ENCODE measurements at regions of chr20 and their contacts with region 1.

Region 1: GRCh38 chr20:3820048-3820900 is at the start of gene AP5S1:
- DNase-seq: peak; percentile 90
- H3K4me3 Mint-ChIP-seq: peak within 1 kb of the TSS; percentile 85
- H3K27ac Mint-ChIP-seq: peak within 1 kb of the TSS; percentile 89
- H3K4me1 Mint-ChIP-seq: peaks cover 42% of the 10 kb centered on the region
- H3K27me3 Mint-ChIP-seq: no peaks in the 10 kb centered on the region
- total RNA-seq, gene AP5S1: 14.9 and 15.0 TPM in 2 replicates

Region 2: DNA sequence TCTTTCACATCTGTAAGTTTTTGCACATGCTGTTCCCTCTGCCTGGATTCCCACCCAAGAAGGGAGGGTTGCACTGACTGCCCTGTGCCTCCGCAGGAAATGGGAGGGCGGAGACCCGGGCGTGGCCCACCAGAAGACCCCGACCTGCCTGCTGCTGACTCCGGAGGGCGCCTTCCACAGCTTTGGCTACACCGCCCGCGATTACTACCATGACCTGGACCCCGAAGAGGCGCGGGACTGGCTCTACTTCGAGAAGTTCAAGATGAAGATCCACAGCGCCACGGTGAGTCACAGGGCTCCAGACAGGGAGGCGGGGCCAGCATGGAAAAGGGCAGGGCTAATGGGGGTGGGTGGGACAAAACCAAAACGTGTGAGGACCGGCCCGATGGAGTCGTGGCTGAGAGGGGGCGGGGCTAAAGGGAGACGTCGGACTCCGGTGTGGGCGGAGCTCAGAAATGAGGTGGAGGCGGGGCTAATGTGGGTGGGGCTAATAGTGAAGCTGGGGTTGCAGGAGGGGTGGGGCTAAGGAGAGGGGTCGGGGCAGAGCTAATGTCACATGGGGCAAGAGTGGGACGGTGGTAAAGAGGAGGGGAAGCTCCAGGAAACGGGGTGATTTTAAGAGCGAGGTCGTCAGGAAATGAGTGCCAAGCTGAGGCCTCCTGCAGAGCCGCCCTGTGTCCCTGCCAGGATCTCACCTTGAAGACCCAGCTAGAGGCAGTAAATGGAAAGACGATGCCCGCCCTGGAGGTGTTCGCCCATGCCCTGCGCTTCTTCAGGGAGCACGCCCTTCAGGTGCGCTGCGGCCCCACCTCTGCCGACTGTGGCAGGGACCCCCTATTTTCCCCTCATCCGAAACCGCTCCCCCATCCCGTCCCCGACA is 75.2 kb before region 1 on chr20:
- intact Hi-C with region 1: loop called (anchors 2 kb)
- DNase-seq: peak; percentile 59
- H3K4me3 Mint-ChIP-seq: peak overlapping the region; percentile 63
- H3K27ac Mint-ChIP-seq: no peak overlapping the region
- H3K4me1 Mint-ChIP-seq: peaks cover 13% of the 10 kb centered on the region
- H3K27me3 Mint-ChIP-seq: peaks cover 15% of the 10 kb centered on the region

Region 3: GRCh38 chr20:3781153-3781910 is 38.9 kb before region 1 on chr20 and contains the start of gene SPEF1:
- intact Hi-C with region 1: loop called (anchors 1 kb)
- DNase-seq: no peak
- H3K4me3 Mint-ChIP-seq: peak within 1 kb of the TSS; percentile 64
- H3K27ac Mint-ChIP-seq: no peak within 1 kb of the TSS
- H3K4me1 Mint-ChIP-seq: peaks cover 43% of the 10 kb centered on the region
- H3K27me3 Mint-ChIP-seq: peaks cover 24% of the 10 kb centered on the region
- total RNA-seq, gene SPEF1: 0.12 TPM in 1 of 2 replicates, not detected in the other

Region 4: DNA sequence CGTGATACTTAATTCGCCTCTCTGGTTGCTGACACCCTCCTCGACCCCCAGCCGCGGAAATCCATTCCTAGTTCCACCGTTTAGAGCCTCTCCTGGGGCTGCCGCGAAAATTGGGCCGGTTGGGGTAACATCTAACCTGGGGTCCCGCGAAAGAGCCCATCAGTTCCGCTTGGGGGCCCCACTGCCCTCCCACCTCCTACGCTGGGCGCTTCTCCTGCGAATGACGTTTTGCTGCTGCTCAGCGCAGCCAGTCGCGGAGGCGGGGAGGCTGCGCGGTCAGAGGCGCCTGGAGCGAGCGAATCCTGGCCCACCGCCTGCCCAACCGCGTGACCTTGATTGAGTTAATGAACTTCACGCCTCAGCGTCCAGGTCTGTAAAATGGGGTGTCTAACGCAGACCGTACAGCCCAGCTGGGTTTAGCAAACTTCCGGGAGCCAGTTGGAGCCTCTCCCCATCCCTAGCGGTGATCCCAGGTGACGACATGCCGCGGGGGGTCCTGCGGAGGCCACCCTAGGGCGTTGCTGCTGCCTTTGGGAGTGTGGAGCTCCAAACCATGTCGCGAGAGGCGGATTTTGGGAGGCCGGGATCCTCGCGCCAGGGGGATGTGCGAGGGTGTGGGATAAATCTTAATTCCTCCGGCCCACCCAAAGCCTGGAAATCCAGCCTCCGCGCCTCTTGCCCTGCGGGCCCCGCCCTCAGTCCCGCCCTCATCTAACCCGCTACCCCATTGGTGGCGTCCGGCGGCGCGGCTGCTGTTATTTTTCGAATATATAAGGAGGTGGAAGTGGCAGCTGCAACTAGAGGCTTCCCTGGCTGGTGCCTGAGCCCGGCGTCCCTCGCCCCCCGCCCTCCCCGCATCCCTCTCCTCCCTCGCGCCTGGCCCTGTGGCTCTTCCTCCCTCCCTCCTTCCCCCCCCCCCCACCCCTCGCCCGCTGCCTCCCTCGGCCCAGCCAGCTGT is 24.5 kb before region 1 on chr20 and contains the start of gene CDC25B:
- intact Hi-C with region 1: loop called (anchors 1 kb)
- DNase-seq: peak; percentile 81
- H3K4me3 Mint-ChIP-seq: peak within 1 kb of the TSS; percentile 93
- H3K27ac Mint-ChIP-seq: peak within 1 kb of the TSS; percentile 96
- H3K4me1 Mint-ChIP-seq: peaks cover 47% of the 10 kb centered on the region
- H3K27me3 Mint-ChIP-seq: no peaks in the 10 kb centered on the region
- total RNA-seq, gene CDC25B: 71.7 and 76.2 TPM in 2 replicates

Region 5: GRCh38 chr20:3888622-3889488 is 68.6 kb after region 1 on chr20 and contains the start of gene PANK2:
- intact Hi-C with region 1: loop called (anchors 1 kb)
- DNase-seq: peak; percentile 98
- H3K4me3 Mint-ChIP-seq: peak within 1 kb of the TSS; percentile 100
- H3K27ac Mint-ChIP-seq: peak within 1 kb of the TSS; percentile 98
- H3K4me1 Mint-ChIP-seq: peaks cover 44% of the 10 kb centered on the region
- H3K27me3 Mint-ChIP-seq: no peaks in the 10 kb centered on the region
- total RNA-seq, gene PANK2: 51.4 and 54.6 TPM in 2 replicates

Region 6: GRCh38 chr20:4014031-4014474 is 193.8 kb after region 1 on chr20:
- intact Hi-C with region 1: loop called (anchors 1 kb)
- DNase-seq: no peak
- H3K4me3 Mint-ChIP-seq: peak overlapping the region; percentile 87
- H3K27ac Mint-ChIP-seq: peak overlapping the region; percentile 78
- H3K4me1 Mint-ChIP-seq: peaks cover 57% of the 10 kb centered on the region
- H3K27me3 Mint-ChIP-seq: peaks cover 4% of the 10 kb centered on the region

Region 7: GRCh38 chr20:4227085-4227821 is 407.0 kb after region 1 on chr20:
- intact Hi-C with region 1: no loop called
- DNase-seq: no peak
- H3K4me3 Mint-ChIP-seq: no peak overlapping the region
- H3K27ac Mint-ChIP-seq: no peak overlapping the region
- H3K4me1 Mint-ChIP-seq: peaks cover 5% of the 10 kb centered on the region
- H3K27me3 Mint-ChIP-seq: peaks cover 18% of the 10 kb centered on the region

Region 8: DNA sequence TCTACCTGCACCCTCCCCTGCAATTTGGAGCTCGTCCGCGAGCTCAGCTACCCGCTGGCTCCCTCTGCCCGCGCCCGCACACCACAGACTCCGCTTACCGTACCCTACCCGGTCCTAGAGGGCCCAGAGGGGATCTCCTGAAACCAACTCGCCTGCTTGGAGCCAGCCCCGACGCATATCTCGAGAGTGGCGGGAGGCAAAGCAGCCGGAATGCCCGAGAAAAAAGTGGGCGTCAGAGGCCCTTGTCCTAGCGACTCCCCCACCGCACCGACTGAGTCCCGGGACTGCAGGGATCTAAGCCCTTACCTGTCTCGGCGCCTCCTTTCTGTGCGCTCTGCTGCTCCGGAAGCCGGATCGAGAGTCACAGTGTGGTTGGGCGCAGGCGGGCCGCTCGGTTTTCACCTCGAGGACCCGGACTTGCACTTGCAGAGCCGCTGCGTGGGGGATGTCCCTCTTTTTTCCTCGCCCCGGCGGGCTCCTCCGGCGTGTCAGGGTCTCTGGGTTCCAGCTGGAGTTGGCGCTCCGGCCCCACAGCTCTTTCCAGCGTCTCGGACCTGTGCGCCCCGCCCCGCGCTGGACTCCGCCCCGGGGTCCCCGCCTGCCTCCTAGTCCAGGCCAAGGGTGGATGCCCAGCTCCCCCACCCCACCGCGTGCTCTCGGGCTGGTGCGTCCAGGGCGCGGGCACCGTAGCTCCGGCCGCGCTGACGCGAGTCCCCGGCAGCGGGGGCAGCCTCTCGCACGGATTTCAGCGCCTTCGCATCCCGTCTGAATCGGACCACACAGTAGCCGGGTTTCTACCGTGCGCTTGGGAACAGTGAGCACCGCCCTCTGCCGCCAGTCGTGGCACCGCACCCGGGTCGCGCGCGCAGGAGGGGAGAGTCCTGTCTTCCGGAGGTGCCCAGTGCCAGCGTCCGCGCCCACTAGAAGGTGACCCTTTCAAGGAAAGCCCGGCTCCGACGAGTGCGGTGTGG is 1496.2 kb after region 1 on chr20 and contains the start of gene PROKR2:
- intact Hi-C with region 1: no loop called
- DNase-seq: no peak
- H3K4me3 Mint-ChIP-seq: no peak within 1 kb of the TSS
- H3K27ac Mint-ChIP-seq: no peak within 1 kb of the TSS
- H3K4me1 Mint-ChIP-seq: no peaks in the 10 kb centered on the region
- H3K27me3 Mint-ChIP-seq: peaks cover 46% of the 10 kb centered on the region
- total RNA-seq, gene PROKR2: not detected in 2 replicates